MCF 10A (cell line): ENCODE measurements at regions of chr12 and their contacts with region 1.

Region 1: DNA sequence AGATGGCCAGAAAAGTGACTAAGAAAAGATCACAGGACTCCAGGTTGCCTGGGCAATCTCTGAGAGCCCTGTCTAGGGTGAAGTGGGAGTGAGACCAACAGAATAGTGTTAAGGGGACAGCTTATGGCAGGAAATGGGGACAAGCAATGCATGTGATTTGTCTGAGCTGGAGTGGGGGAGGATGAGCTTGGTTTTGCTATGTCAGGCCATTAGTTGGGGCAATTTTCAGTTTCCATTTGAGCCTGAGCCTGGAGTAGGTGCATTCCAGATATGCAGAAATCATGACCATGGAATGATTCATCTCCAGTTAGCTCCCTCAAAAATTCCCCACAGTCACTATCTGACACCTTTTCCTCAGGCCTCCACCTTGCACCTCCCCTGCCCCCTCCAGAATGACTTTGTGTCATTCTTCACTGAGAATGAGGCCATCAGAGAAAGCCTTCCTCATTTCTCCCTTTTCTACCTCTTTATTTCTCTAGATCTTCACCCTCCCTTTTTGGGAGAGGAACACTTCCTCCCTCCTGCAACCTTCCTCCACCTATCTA is 150.9 kb upstream of the PLEKHG7 start:
- DNase-seq: peak; percentile 62
- H3K4me3 Mint-ChIP-seq: no peak overlapping the region
- H3K27ac Mint-ChIP-seq: no peak overlapping the region
- H3K4me1 Mint-ChIP-seq: no peaks in the 10 kb centered on the region
- H3K27me3 Mint-ChIP-seq: no peaks in the 10 kb centered on the region
- CTCF ChIP-seq: no peak

Region 2: GRCh38 chr12:92431146-92431545 is 120.8 kb before region 1 on chr12:
- CTCF ChIA-PET with region 1: no interaction called
- POLR2A ChIA-PET with region 1: no interaction called
- intact Hi-C with region 1: loop called (anchors 10 kb)
- DNase-seq: no peak
- H3K4me3 Mint-ChIP-seq: no peak overlapping the region
- H3K27ac Mint-ChIP-seq: no peak overlapping the region
- H3K4me1 Mint-ChIP-seq: no peaks in the 10 kb centered on the region
- H3K27me3 Mint-ChIP-seq: no peaks in the 10 kb centered on the region
- CTCF ChIP-seq: no peak

Region 3: DNA sequence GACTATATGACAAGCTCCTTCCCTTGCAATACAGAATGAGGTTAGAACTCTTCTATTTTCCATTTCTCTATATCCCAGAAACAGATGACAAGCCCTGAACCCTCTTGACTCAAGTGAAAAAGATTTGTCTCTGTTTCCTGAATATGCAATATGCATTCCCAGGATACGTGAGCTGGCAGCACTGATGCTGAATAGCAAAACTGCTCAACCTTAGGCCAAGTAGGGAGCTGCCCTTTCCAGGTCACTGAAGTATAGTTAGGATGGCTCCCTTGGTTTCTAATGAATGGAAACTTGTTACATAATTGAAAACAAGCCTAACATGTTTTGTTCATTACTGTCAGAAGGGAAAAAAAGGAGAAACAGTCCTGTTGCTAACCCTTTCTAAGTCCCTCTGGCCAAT is 103.0 kb after region 1 on chr12:
- CTCF ChIA-PET with region 1: no interaction called
- POLR2A ChIA-PET with region 1: no interaction called
- intact Hi-C with region 1: no loop called
- DNase-seq: no peak
- H3K4me3 Mint-ChIP-seq: no peak overlapping the region
- H3K27ac Mint-ChIP-seq: no peak overlapping the region
- H3K4me1 Mint-ChIP-seq: peaks cover 9% of the 10 kb centered on the region
- H3K27me3 Mint-ChIP-seq: no peaks in the 10 kb centered on the region
- CTCF ChIP-seq: no peak